Gastrocnemius medialis (tissue), 4 donors: ENCODE measurements at regions of chr9 and their contacts with region 1.

Region 1: GRCh38 chr9:72592502-72593403 is 71.3 kb downstream of the TMC1 start:
- DNase-seq: peak in 1 of 2 donors; percentile 23
- ATAC-seq: peak; percentile 89 to 95
- H3K4me3 ChIP-seq: no peak overlapping the region
- H3K27ac ChIP-seq: peak overlapping the region in 1 of 4 donors; percentile 29
- H3K4me1 ChIP-seq: peaks cover 6 to 7% of the 10 kb centered on the region in 2 donors
- H3K27me3 ChIP-seq: no peaks in the 10 kb centered on the region
- CTCF ChIP-seq: peak; percentile 81 to 92 (median 85)
- POLR2A ChIP-seq: no peak

Region 2: DNA sequence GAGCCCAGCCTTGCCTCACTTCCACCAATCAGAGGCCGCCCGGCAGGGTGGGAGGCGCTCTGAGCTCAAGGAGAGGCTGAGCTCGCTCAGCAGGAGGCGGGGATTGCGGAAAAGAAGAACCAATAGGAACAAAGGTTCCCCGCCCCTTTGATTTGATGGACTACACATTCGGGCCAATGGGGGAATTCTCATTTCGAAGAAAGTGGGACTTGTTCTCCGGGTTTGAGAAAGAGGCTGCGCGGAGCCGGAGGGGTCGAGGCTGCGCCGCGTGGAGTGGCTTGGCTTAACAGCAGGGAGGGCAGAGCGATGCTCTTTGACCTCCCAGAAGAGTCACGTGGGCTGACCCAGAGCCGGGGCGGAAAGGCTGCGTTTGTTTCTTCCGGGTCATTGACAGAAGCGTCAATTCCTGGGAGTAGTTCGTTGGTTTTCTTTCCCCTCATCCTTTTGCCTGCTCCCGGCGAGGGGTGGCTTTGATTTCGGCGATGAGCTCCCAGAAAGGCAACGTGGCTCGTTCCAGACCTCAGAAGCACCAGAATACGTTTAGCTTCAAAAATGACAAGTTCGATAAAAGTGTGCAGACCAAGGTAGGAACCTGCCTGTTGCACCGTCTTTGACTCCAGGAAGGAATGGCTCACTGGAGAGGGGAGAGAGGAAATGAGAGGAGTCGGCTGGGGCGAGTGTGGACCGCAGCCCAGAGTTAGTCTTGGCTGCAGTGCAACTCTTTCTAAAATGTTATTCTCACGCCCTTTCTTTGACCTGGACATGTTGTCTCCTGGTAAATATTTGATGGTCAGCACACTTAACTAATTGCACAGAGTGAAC is 681.3 kb before region 1 on chr9 and contains the start of gene C9orf85:
- in situ Hi-C with region 1: loop called in 1 of 4 experiments (anchors 25 kb)
- intact Hi-C with region 1: no loop called
- DNase-seq: peak; percentile 99
- ATAC-seq: peak; percentile 91 to 96
- H3K4me3 ChIP-seq: peak within 1 kb of the TSS; percentile 73 to 96 (median 87)
- H3K27ac ChIP-seq: peak within 1 kb of the TSS; percentile 88 to 96 (median 92)
- H3K4me1 ChIP-seq: peaks cover 43 to 58% of the 10 kb centered on the region in 2 donors
- H3K27me3 ChIP-seq: no peaks in the 10 kb centered on the region
- CTCF ChIP-seq: no peak
- POLR2A ChIP-seq: peak in 1 of 2 donors; percentile 69
- total RNA-seq, gene C9orf85: 1.7 to 9.6 (median 6.3) TPM

Region 3: DNA sequence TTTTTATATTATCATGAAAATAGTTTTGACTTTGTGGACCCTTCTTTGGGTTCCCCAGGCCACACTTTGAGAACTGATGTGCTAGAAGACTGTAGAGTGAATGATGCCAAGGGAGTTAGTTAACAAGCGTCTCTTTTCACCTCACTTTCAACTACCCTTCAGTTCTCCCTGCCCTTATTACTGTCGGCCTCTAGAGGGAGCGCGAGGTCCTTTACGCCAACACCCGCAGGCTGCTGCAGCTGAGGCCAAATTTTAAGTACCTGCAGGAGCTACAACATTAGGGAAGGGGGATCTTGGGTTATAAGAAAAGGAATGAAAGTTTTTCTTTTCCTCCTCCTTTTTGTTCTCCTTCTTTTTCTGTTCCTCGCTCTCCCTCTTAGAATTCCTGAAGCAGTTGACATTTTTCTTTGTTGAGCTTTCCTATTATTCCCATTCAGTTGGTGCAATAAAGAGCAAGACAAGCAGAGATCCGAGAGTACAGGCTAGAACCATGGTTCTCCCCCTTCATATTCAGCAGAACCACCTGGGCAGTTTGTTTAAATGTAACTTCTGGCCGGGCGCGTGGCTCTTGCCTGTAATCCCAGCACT is 311.7 kb before region 1 on chr9:
- in situ Hi-C with region 1: loop called in 2 of 4 experiments (anchors 5 kb)
- intact Hi-C with region 1: loop called (anchors 2 kb)
- DNase-seq: peak; percentile 36 to 67
- ATAC-seq: peak; percentile 89 to 96
- H3K4me3 ChIP-seq: no peak overlapping the region
- H3K27ac ChIP-seq: no peak overlapping the region
- H3K4me1 ChIP-seq: no peaks in the 10 kb centered on the region
- H3K27me3 ChIP-seq: no peaks in the 10 kb centered on the region
- CTCF ChIP-seq: peak; percentile 81 to 93 (median 86)
- POLR2A ChIP-seq: no peak

Region 4: GRCh38 chr9:72396247-72397091 is 196.3 kb before region 1 on chr9:
- in situ Hi-C with region 1: loop called in 1 of 4 experiments (anchors 25 kb)
- intact Hi-C with region 1: no loop called
- DNase-seq: peak in 1 of 2 donors; percentile 19
- ATAC-seq: peak; percentile 95 to 100
- H3K4me3 ChIP-seq: peak overlapping the region in 2 of 4 donors; percentile 3 to 24
- H3K27ac ChIP-seq: peak overlapping the region; percentile 72 to 83 (median 82)
- H3K4me1 ChIP-seq: peaks cover 5 to 17% of the 10 kb centered on the region in 2 donors
- H3K27me3 ChIP-seq: no peaks in the 10 kb centered on the region
- CTCF ChIP-seq: peak in 1 of 5 experiments; percentile 10
- POLR2A ChIP-seq: peak in 1 of 2 donors; percentile 25

Region 5: DNA sequence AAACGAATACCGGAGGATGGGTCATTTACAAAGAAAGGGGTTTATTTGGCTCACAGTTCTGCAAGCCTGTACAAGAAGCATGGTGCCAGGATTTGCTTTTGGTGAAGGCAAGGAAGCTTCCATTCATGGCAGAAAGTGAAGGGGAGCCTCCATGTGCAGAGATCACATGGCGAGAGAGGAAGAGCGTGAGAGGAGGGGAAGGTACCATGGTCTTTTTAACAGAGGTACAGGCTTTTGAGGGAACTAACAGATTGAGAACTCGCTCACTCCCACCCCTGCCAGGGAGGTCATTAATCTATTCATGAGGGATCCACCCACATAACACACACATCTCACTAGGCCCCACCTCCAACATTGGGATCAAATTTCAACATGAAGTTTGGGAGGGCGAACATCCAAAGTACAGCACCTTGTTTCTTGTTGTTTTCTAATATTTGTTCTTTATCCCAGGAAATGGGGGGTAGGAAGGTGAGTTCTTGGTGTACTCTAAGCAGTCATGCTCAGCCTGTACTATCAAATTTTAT is 52.9 kb before region 1 on chr9:
- in situ Hi-C with region 1: loop called in 1 of 4 experiments (anchors 10 kb)
- intact Hi-C with region 1: no loop called
- DNase-seq: no peak
- ATAC-seq: no peak
- H3K4me3 ChIP-seq: no peak overlapping the region
- H3K27ac ChIP-seq: no peak overlapping the region
- H3K4me1 ChIP-seq: no peaks in the 10 kb centered on the region
- H3K27me3 ChIP-seq: no peaks in the 10 kb centered on the region
- CTCF ChIP-seq: no peak
- POLR2A ChIP-seq: no peak